ENCODE measurements at regions of chr1 and their contacts with region 1.

Region 1: GRCh38 chr1:61253059-61253735 is 170.8 kb downstream of the NFIA start:
- DNase-seq: peak; percentile 95
- H3K4me3 ChIP-seq: no peak overlapping the region
- H3K27ac ChIP-seq: peak overlapping the region; percentile 74 to 82 (median 76)
- H3K4me1 ChIP-seq: peaks cover 57 to 99% (median 90%) of the 10 kb centered on the region in 4 donors
- H3K27me3 ChIP-seq: no peaks in the 10 kb centered on the region
- CTCF ChIP-seq: no peak
- EP300 ChIP-seq: no peak
- POLR2A ChIP-seq: no peak

Region 2: DNA sequence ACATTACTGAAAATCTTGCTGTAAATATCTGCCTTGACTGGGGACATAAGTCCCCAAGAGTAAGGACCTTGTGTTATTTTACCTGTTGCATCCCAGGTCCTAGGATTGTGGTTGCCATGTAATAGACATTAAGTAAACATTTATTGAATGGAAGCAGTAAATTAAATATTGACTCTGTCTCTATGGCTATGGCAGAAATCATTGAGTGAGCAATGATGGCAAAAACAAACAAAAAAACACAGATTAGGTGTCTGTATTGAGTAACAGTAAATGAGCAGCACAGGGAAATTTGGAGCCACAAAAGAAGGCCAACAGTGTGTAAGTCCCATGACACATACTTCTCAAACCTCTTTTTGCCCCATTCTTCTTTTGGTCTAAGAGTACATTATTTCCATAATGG is 69.6 kb after region 1 on chr1:
- intact Hi-C with region 1: loop called (anchors 5 kb)
- DNase-seq: no peak
- H3K4me3 ChIP-seq: no peak overlapping the region
- H3K27ac ChIP-seq: peak overlapping the region; percentile 7 to 76 (median 47)
- H3K4me1 ChIP-seq: peaks cover 35 to 71% (median 58%) of the 10 kb centered on the region in 4 donors
- H3K27me3 ChIP-seq: no peaks in the 10 kb centered on the region
- CTCF ChIP-seq: no peak
- EP300 ChIP-seq: no peak
- POLR2A ChIP-seq: no peak

Measured in esophagus muscularis mucosa (tissue), 4 donors.